Activated CD4-positive, alpha-beta T cell treated with anti-CD3 and anti-CD28 coated beads for 36 hours (primary cell): ENCODE measurements at regions of chr16 and their contacts with region 1.

Region 1: GRCh38 chr16:75566040-75566810 is at the start of gene GABARAPL2:
- DNase-seq: peak; percentile 94
- ATAC-seq: peak; percentile 72
- H3K4me3 Mint-ChIP-seq: peak within 1 kb of the TSS; percentile 82
- H3K27ac Mint-ChIP-seq: peak within 1 kb of the TSS; percentile 86
- H3K4me1 Mint-ChIP-seq: peaks cover 44% of the 10 kb centered on the region
- H3K27me3 Mint-ChIP-seq: peaks cover 10% of the 10 kb centered on the region
- total RNA-seq, gene GABARAPL2: 31.9 to 58.0 TPM

Region 2: GRCh38 chr16:74296432-74297144 is 1269.6 kb before region 1 on chr16 and contains the start of gene PSMD7:
- CTCF ChIA-PET with region 1: no interaction called
- POLR2A ChIA-PET with region 1: no interaction called
- intact Hi-C with region 1: loop called in 1 of 2 experiments (anchors 5 kb)
- DNase-seq: peak; percentile 95
- ATAC-seq: peak; percentile 91
- H3K4me3 Mint-ChIP-seq: peak within 1 kb of the TSS; percentile 98
- H3K27ac Mint-ChIP-seq: peak within 1 kb of the TSS; percentile 99
- H3K4me1 Mint-ChIP-seq: peaks cover 34% of the 10 kb centered on the region
- H3K27me3 Mint-ChIP-seq: no peaks in the 10 kb centered on the region
- total RNA-seq, gene PSMD7: 122 to 134 TPM

Region 3: GRCh38 chr16:75432828-75433731 is 133.1 kb before region 1 on chr16 and contains the start of gene CFDP1:
- CTCF ChIA-PET with region 1: interaction called, 4 read pairs
- POLR2A ChIA-PET with region 1: no interaction called
- intact Hi-C with region 1: loop called in 1 of 2 experiments (anchors 1 kb)
- DNase-seq: peak; percentile 97
- ATAC-seq: peak; percentile 94
- H3K4me3 Mint-ChIP-seq: peak within 1 kb of the TSS; percentile 92
- H3K27ac Mint-ChIP-seq: peak within 1 kb of the TSS; percentile 95
- H3K4me1 Mint-ChIP-seq: peaks cover 39% of the 10 kb centered on the region
- H3K27me3 Mint-ChIP-seq: no peaks in the 10 kb centered on the region
- total RNA-seq, gene CFDP1: 44.0 to 48.2 TPM

Region 4: DNA sequence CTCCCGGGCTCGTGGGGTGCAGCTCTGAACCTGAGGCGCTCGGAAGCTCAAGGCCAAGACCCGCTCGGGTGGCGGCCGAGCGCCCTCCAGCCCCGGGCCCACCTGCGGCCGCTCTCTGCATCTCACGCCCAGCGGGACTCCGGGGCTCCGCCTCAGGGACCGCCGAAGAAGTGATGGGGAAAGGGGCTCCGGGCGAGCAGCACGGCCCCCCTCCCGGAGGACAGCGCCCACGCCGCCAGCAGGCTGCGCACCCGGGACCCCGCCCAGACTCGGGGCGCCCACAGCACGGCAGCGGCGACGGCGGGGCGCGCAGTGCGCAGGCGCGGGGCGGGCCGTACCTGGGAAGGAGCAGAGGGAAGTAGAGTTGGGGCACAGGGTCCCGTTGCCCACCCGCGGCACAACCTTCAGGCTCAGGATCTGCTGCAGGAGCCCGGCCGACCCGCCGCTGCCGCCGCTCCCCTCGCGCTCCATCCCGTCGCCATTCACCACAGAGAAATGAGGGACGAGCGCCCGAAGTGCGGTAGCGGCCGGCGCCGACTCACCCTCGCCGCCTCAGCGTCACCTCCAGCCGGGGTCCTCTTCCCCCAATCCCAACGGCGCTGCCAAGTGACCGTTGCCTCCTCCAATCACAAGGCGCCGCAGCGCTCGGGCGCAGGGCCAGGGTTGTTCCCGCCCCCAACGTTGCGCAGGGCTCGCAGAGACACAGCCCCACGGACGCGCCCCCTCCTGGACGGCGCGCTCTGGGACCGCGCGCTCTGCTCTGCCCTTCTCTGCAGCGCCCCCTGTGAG is 101.9 kb before region 1 on chr16 and contains the start of gene TMEM170A:
- CTCF ChIA-PET with region 1: interaction called, 4 read pairs
- POLR2A ChIA-PET with region 1: no interaction called
- intact Hi-C with region 1: loop called (anchors 1 kb)
- DNase-seq: peak; percentile 100
- ATAC-seq: peak; percentile 94
- H3K4me3 Mint-ChIP-seq: peak within 1 kb of the TSS; percentile 98
- H3K27ac Mint-ChIP-seq: peak within 1 kb of the TSS; percentile 94
- H3K4me1 Mint-ChIP-seq: peaks cover 45% of the 10 kb centered on the region
- H3K27me3 Mint-ChIP-seq: no peaks in the 10 kb centered on the region
- total RNA-seq, gene TMEM170A: 22.0 to 30.5 TPM

Region 5: DNA sequence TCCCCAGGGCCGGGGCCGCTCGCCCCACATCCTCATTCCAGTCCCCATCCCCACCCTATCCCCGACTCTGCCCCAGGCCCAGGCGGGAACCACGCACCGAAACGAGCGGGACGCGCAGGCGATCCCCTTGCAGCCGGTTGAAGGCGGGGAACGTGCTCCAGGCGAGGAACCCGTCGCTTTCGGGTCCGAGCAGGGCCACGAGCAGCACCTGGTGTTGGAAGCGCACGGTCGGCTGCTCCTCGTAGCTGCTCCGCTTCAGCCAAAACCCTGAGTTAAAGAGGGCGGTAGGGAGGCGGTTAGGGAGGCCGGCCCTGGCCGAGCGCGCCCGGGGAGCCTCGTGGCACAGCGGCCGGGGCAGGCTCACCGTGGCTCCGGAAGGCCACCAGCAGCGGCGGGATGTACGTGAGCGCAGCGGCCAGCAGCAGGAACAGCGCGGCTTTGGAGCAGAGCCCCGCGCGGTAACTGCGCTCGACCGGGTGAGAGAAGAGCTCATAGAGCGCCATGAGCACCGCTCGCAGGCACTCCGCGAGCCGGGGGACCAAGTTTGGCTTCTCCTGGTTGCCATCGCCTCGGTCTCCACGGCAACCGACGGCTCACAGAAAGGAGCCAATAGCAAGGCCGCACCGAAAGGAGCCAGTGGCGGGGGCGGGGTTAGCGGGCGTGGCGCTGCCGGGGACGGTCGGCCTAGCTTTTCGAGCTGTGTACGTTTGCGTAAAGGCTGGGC is 10.4 kb before region 1 on chr16 and contains the start of gene TMEM231:
- CTCF ChIA-PET with region 1: interaction called, 16 read pairs
- POLR2A ChIA-PET with region 1: interaction called, 10 read pairs
- intact Hi-C with region 1: loop called (anchors 1 kb)
- DNase-seq: peak; percentile 99
- ATAC-seq: peak; percentile 98
- H3K4me3 Mint-ChIP-seq: peak within 1 kb of the TSS; percentile 79
- H3K27ac Mint-ChIP-seq: peak within 1 kb of the TSS; percentile 71
- H3K4me1 Mint-ChIP-seq: peaks cover 7% of the 10 kb centered on the region
- H3K27me3 Mint-ChIP-seq: peaks cover 3% of the 10 kb centered on the region
- total RNA-seq, gene TMEM231: 3.6 to 4.1 TPM

Region 6: DNA sequence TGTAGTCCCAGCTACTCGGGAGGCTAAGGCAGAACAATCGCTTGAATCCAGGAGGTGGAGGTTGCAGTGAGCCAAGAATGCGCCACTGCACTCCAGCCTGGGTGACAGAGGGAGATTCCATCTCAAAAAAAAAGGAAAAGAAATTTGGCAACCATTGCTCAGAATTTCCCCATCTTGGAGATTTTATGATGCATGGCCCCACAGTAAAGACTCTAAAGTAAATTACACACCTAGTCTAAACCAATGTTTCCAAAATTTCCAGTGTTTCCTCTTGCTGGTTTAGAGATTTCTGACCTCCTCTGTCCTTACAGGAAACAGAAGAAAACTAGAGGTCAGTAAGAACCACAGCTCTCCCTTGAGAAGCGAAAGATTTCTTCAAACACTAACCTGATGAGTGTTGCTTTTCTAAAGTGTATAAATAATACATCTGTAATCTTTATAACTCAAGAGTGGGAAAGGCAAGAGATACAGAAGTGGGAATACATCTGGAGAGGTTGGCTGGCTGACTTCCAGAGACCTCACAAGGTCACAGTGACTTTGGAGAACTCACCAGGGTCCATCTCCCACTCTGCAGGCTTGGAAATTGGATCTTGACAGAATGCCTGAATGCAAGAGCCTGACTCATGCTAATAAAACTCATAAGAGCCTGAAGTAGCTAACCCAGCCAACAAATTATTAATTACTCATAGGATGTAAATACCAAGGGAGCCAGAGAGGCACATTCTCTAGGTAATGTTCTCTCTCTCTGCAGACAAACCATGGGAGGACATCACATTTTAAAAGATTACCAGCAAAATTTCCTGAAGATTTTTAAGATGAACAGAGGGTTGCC is 48.1 kb after region 1 on chr16:
- CTCF ChIA-PET with region 1: interaction called, 4 read pairs
- POLR2A ChIA-PET with region 1: interaction called, 3 read pairs
- intact Hi-C with region 1: loop called in 1 of 2 experiments (anchors 1 kb)
- DNase-seq: no peak
- ATAC-seq: no peak
- H3K4me3 Mint-ChIP-seq: no peak overlapping the region
- H3K27ac Mint-ChIP-seq: no peak overlapping the region
- H3K4me1 Mint-ChIP-seq: peaks cover 23% of the 10 kb centered on the region
- H3K27me3 Mint-ChIP-seq: no peaks in the 10 kb centered on the region

Region 7: GRCh38 chr16:75764154-75764768 is 198.0 kb after region 1 on chr16:
- CTCF ChIA-PET with region 1: no interaction called
- POLR2A ChIA-PET with region 1: no interaction called
- intact Hi-C with region 1: loop called in 1 of 2 experiments (anchors 5 kb)
- DNase-seq: peak; percentile 70
- ATAC-seq: peak; percentile 93
- H3K4me3 Mint-ChIP-seq: no peak overlapping the region
- H3K27ac Mint-ChIP-seq: no peak overlapping the region
- H3K4me1 Mint-ChIP-seq: peaks cover 11% of the 10 kb centered on the region
- H3K27me3 Mint-ChIP-seq: peaks cover 2% of the 10 kb centered on the region